ENCODE measurements at regions of chr15 and their contacts with region 1.

Region 1: GRCh38 chr15:85380217-85380811 is at the start of gene AKAP13:
- DNase-seq: peak; percentile 93
- H3K4me3 Mint-ChIP-seq: peak within 1 kb of the TSS; percentile 90
- H3K27ac Mint-ChIP-seq: peak within 1 kb of the TSS; percentile 94
- H3K4me1 Mint-ChIP-seq: peaks cover 68% of the 10 kb centered on the region
- H3K27me3 Mint-ChIP-seq: peaks cover 2% of the 10 kb centered on the region
- total RNA-seq, gene AKAP13: 78.9 and 81.9 TPM in 2 replicates

Region 2: DNA sequence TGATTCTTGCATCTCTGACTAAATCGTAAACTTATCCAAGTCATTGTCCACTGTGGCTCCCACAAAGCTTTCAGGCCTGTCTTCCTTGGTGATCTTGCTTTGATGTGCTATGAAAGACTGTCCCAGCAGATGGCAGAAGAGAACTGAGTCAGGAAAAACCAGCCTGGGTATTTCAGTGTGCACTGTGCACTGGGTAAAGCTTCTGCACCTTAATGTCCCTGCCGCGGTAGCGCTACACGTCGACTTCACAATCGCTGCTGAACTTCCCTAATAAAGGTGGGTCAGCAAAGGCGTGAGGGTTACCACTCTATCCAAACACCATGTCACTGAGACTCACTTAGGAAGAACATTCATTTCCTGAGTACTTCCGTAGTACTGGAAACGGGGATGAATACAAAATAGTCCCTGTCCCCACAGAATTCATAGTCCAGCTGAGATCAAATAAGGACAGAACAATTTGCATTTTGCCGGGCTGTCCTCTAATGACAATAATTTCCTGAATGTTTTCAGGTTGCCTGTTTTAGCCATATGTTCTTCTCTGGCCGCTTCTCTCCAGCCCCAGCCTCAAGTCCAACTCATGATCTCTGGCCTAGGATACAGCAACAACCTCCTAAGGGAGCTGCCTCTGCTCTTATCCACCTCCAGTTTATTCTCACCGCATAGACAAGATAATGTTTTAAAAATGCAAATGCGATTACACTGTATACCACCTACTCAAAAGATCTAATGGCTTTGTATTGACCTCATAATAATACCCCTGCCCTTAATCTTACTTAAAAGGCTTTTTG is 83.5 kb before region 1 on chr15:
- intact Hi-C with region 1: loop called (anchors 1 kb)
- DNase-seq: peak; percentile 68
- H3K4me3 Mint-ChIP-seq: peak overlapping the region; percentile 34
- H3K27ac Mint-ChIP-seq: no peak overlapping the region
- H3K4me1 Mint-ChIP-seq: peaks cover 18% of the 10 kb centered on the region
- H3K27me3 Mint-ChIP-seq: peaks cover 5% of the 10 kb centered on the region

Region 3: GRCh38 chr15:85330901-85331588 is 49.3 kb before region 1 on chr15:
- intact Hi-C with region 1: loop called (anchors 1 kb)
- DNase-seq: peak; percentile 72
- H3K4me3 Mint-ChIP-seq: peak overlapping the region; percentile 88
- H3K27ac Mint-ChIP-seq: peak overlapping the region; percentile 92
- H3K4me1 Mint-ChIP-seq: peaks cover 51% of the 10 kb centered on the region
- H3K27me3 Mint-ChIP-seq: no peaks in the 10 kb centered on the region

Region 4: DNA sequence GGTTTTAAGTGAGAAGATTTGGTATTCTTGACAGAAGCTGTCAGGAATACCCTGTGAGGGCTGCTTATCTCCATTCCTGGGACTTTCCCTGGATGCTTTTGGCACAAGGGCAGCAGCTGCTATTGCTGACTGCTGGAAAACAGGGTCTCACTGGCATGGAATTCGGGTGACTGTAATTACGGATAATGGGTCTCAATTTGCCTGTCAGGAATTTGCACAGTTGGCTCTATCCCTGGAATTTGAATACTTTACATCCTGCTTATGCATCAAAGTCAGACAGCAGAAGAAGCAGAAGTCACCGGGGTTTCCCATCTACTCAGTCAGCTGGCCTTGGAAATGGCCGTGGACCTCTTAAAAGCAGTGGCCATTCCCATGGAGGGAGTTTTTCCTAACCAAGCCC is 25.9 kb before region 1 on chr15:
- intact Hi-C with region 1: loop called (anchors 1 kb)
- DNase-seq: no peak
- H3K4me3 Mint-ChIP-seq: no peak overlapping the region
- H3K27ac Mint-ChIP-seq: no peak overlapping the region
- H3K4me1 Mint-ChIP-seq: peaks cover 9% of the 10 kb centered on the region
- H3K27me3 Mint-ChIP-seq: no peaks in the 10 kb centered on the region

Region 5: DNA sequence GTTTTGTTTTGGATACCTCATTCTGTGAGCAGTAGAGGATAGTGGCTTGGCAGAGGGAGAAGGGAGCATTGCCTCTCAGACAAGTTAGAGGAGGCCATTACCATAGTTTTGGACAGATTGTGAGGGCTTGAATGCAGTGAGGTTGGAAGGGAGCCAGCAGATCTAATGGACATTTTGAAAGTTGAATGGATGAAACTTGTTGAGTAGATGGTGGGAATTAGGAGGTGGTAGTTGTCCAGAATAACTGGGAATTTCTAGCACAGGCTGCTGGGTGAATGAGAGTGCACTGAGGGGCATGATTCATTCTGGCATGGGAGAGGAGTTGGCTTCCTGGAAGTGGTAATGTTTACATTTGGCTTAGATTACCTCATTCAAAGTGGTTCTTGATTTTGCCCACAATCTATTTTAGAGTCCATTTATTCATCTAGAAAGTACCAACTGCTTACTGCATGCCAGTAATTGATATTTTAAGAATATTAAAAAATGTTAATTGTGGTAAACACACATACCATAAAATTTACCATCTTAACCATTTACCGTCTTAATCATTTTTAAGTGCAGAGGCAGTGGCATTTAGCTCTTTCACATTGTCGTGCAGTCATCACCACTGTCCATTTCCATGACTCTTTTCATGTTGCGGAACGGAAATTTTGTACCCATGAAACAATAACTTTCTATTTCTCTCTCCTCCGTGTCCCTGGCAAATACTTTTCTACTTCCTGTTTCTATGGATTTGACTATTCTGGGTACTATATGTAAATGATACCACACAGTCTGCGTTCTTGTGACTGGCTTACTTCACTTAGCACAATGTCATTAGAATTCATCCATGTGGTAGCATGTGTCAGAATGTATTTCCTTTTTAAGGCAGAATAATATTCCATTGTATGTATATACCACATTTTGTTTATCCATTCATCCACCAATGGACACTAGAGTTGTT is 27.8 kb after region 1 on chr15:
- intact Hi-C with region 1: loop called (anchors 1 kb)
- DNase-seq: peak; percentile 8
- H3K4me3 Mint-ChIP-seq: peak overlapping the region; percentile 32
- H3K27ac Mint-ChIP-seq: peak overlapping the region; percentile 90
- H3K4me1 Mint-ChIP-seq: peaks cover 79% of the 10 kb centered on the region
- H3K27me3 Mint-ChIP-seq: no peaks in the 10 kb centered on the region

Region 6: DNA sequence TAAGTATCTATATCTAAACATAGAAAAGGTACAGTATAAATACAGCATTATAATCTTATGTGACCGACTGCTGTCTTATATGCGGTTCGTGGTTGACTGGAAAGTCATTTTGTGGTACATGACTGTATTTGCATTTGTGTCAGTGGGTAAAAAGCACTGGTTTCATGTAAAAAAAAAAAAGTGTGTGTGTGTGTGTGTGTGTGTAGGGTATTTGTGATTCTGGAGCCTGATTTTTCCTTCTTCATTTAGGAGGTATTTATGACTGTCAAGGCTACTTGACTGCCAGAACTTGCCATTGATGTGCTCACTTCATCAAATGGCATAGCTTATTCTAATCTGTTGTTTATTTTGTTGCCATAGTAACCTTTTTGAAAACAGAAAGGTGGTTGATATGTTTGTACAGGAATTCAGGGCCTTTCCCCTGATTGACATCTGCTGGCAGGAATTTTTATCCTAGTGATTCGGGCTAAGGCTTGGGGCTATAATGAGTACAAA is 63.3 kb after region 1 on chr15:
- intact Hi-C with region 1: loop called (anchors 1 kb)
- DNase-seq: no peak
- H3K4me3 Mint-ChIP-seq: peak overlapping the region; percentile 6
- H3K27ac Mint-ChIP-seq: peak overlapping the region; percentile 84
- H3K4me1 Mint-ChIP-seq: peaks cover 28% of the 10 kb centered on the region
- H3K27me3 Mint-ChIP-seq: peaks cover 2% of the 10 kb centered on the region

Region 7: GRCh38 chr15:85794603-85795336 is 414.5 kb after region 1 on chr15 and contains the start of gene KLHL25:
- intact Hi-C with region 1: loop called (anchors 10 kb)
- DNase-seq: peak; percentile 92
- H3K4me3 Mint-ChIP-seq: peak within 1 kb of the TSS; percentile 91
- H3K27ac Mint-ChIP-seq: peak within 1 kb of the TSS; percentile 83
- H3K4me1 Mint-ChIP-seq: peaks cover 31% of the 10 kb centered on the region
- H3K27me3 Mint-ChIP-seq: peaks cover 4% of the 10 kb centered on the region
- total RNA-seq, gene KLHL25: 10.7 and 11.0 TPM in 2 replicates

Measured in activated T-helper 1 cell treated with anti-CD3 and anti-CD28 coated beads, Interleukin-12 subunit alpha, Interleukin-12 subunit beta, Interleukin-2, Interleukin-4 antibody, amounts not matched to agents 30 ng/mL and 10 ng/mL and 1 ng/mL, durations not matched to agents 14 hours and 24 hours and 36 hours (primary cell).